Activated B cell treated with CpG ODN at 0.5 μM for 24 hours (primary cell): ENCODE measurements at regions of chr4 and their contacts with region 1.

Region 1: GRCh38 chr4:184649026-184649970 is at the starts of genes CASP3 and PRIMPOL:
- DNase-seq: peak; percentile 98
- ATAC-seq: peak; percentile 92
- H3K4me3 Mint-ChIP-seq: peak within 1 kb of the TSS; percentile 94
- H3K27ac Mint-ChIP-seq: peak within 1 kb of the TSS; percentile 89
- H3K4me1 Mint-ChIP-seq: peaks cover 43% of the 10 kb centered on the region
- H3K27me3 Mint-ChIP-seq: no peaks in the 10 kb centered on the region
- CTCF ChIP-seq: no peak
- total RNA-seq, gene CASP3: 24.0 and 24.9 TPM in 2 replicates
- total RNA-seq, gene PRIMPOL: 9.1 and 11.6 TPM in 2 replicates

Region 2: GRCh38 chr4:183659029-183659871 is 990.0 kb before region 1 on chr4 and contains the starts of genes RWDD4 and TRAPPC11:
- CTCF ChIA-PET with region 1: no interaction called
- POLR2A ChIA-PET with region 1: interaction called, 7 read pairs
- intact Hi-C with region 1: loop called (anchors 5 kb)
- DNase-seq: peak; percentile 87
- ATAC-seq: peak; percentile 98
- H3K4me3 Mint-ChIP-seq: peak within 1 kb of the TSS; percentile 93
- H3K27ac Mint-ChIP-seq: peak within 1 kb of the TSS; percentile 92
- H3K4me1 Mint-ChIP-seq: peaks cover 33% of the 10 kb centered on the region
- H3K27me3 Mint-ChIP-seq: no peaks in the 10 kb centered on the region
- CTCF ChIP-seq: no peak
- total RNA-seq, gene RWDD4: 14.6 and 15.4 TPM in 2 replicates
- total RNA-seq, gene TRAPPC11: 42.9 and 45.2 TPM in 2 replicates

Region 3: GRCh38 chr4:183860731-183861130 is 788.6 kb before region 1 on chr4:
- CTCF ChIA-PET with region 1: no interaction called
- POLR2A ChIA-PET with region 1: no interaction called
- intact Hi-C with region 1: no loop called
- DNase-seq: no peak
- ATAC-seq: no peak
- H3K4me3 Mint-ChIP-seq: no peak overlapping the region
- H3K27ac Mint-ChIP-seq: no peak overlapping the region
- H3K4me1 Mint-ChIP-seq: no peaks in the 10 kb centered on the region
- H3K27me3 Mint-ChIP-seq: peaks cover 7% of the 10 kb centered on the region
- CTCF ChIP-seq: no peak

Region 4: DNA sequence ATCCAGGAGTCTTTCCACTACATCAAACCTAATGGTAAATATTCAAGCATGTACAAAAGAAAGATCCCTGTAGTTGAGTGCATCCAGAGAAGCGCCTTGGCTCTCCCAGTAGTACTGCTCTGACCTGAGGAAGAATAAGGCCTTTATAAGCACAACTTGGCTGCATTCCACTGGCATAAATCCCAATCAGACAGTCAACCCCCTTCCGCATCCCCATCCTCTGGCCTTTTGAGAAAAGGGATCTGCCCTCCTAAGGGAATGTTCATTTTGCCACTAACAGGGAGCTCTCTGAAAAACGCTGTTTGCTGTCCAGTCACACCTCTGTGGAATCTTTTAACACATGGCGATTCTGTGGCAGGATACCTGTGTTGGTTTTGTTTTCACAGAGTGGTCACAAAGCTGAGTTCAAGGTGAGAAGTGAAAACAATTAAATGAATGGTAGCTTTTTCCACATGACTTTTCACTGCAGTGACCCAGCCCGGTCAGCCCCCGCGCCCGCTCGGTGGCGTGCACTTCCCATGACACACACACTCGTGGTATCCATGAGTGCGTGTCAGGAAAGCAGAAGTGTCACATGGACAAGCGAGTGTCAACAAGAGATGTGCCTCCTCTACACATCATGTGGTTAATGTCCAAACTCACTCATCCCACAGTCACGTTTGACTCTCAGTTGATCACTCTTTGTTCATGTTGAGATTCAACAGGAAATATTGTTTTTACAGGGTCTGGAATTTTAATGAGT is 319.5 kb before region 1 on chr4:
- CTCF ChIA-PET with region 1: no interaction called
- POLR2A ChIA-PET with region 1: interaction called, 13 read pairs
- intact Hi-C with region 1: no loop called
- DNase-seq: no peak
- ATAC-seq: peak; percentile 26
- H3K4me3 Mint-ChIP-seq: peak overlapping the region; percentile 47
- H3K27ac Mint-ChIP-seq: peak overlapping the region; percentile 97
- H3K4me1 Mint-ChIP-seq: peaks cover 78% of the 10 kb centered on the region
- H3K27me3 Mint-ChIP-seq: no peaks in the 10 kb centered on the region
- CTCF ChIP-seq: no peak

Region 5: GRCh38 chr4:184688447-184688846 is 39.1 kb after region 1 on chr4:
- CTCF ChIA-PET with region 1: no interaction called
- POLR2A ChIA-PET with region 1: no interaction called
- intact Hi-C with region 1: no loop called
- DNase-seq: no peak
- ATAC-seq: no peak
- H3K4me3 Mint-ChIP-seq: no peak overlapping the region
- H3K27ac Mint-ChIP-seq: no peak overlapping the region
- H3K4me1 Mint-ChIP-seq: no peaks in the 10 kb centered on the region
- H3K27me3 Mint-ChIP-seq: no peaks in the 10 kb centered on the region
- CTCF ChIP-seq: no peak

Region 6: DNA sequence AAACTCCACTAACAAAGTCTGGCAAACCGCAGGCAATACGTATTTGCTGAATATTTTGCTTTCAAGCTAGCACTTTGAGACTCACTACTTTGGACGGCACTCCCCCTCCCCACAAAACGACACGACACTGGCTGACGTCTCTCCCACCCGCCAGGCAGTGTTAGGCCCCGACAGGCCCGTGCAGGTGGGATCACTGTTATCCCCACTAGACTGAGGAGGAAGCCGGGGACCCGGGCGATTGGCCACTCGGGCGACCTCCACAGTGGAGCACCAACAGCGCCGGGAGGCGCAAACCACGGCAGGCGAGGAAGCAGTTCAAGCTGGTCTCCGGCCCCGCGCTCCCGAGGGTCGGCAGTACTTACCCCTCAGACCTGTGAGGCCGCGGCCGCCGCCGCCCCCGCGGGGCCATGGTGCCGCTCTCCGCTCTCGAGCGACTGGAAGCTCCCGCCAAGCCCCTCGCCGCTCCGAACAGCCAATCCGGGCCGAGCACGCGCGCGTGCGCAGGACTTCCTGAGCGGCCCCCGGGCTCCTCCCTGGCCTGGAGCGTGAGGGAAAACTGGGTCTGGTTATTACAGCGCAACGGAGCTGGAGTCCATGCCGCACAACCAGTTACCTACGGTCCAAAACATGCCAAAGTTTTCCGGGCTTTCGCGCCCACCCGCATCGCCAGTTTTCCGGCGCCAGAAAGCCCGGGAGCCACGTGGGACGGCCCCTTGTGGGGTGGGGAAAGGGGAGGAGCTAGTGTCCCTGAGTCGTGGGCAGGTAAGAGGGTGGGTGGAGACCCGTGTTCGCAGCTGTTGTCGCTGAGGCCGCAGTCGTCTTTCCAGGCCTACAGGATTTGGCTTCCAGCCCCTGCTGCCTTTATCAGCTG is 84.6 kb after region 1 on chr4 and contains the start of gene CENPU:
- CTCF ChIA-PET with region 1: interaction called, 4 read pairs
- POLR2A ChIA-PET with region 1: interaction called, 26 read pairs
- intact Hi-C with region 1: loop called (anchors 1 kb)
- DNase-seq: peak; percentile 95
- ATAC-seq: peak; percentile 96
- H3K4me3 Mint-ChIP-seq: peak within 1 kb of the TSS; percentile 88
- H3K27ac Mint-ChIP-seq: peak within 1 kb of the TSS; percentile 85
- H3K4me1 Mint-ChIP-seq: peaks cover 19% of the 10 kb centered on the region
- H3K27me3 Mint-ChIP-seq: no peaks in the 10 kb centered on the region
- CTCF ChIP-seq: no peak
- total RNA-seq, gene CENPU: 7.0 and 7.1 TPM in 2 replicates

Region 7: DNA sequence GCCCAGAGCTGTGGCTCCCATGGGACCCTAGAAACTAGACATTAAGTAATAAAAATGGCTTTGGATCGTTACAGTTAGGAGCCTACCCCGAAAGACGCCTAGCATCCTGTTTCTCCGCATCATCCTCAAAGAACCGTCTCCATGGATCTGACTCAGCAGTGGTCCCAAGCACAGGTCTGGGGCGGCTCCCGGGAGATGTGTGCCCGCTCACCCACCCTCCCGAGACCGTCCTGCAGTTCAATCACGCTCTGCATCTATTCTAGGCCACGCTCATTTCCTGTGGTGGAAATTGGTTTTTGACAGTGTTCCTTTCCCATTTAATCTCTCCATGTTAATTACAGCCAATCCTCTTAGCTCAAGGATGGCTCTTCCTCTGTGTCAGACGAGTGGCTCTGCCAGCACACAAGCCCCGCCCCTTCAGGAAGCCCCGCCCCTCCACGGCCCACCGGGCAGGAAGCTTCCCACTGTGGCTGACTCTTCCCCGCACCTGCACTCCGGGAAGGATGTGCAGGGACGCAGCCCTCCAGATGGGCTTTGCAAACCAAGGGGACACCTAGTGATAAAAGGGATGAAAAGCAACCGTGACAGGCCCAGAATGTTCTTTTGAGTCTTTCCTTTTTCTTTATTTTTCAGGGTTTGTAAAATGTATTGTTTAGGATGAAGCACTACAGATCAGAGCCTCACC is 334.5 kb after region 1 on chr4:
- CTCF ChIA-PET with region 1: no interaction called
- POLR2A ChIA-PET with region 1: no interaction called
- intact Hi-C with region 1: loop called (anchors 1 kb)
- DNase-seq: peak; percentile 61
- ATAC-seq: peak; percentile 89
- H3K4me3 Mint-ChIP-seq: no peak overlapping the region
- H3K27ac Mint-ChIP-seq: no peak overlapping the region
- H3K4me1 Mint-ChIP-seq: no peaks in the 10 kb centered on the region
- H3K27me3 Mint-ChIP-seq: peaks cover 3% of the 10 kb centered on the region
- CTCF ChIP-seq: no peak

Region 8: DNA sequence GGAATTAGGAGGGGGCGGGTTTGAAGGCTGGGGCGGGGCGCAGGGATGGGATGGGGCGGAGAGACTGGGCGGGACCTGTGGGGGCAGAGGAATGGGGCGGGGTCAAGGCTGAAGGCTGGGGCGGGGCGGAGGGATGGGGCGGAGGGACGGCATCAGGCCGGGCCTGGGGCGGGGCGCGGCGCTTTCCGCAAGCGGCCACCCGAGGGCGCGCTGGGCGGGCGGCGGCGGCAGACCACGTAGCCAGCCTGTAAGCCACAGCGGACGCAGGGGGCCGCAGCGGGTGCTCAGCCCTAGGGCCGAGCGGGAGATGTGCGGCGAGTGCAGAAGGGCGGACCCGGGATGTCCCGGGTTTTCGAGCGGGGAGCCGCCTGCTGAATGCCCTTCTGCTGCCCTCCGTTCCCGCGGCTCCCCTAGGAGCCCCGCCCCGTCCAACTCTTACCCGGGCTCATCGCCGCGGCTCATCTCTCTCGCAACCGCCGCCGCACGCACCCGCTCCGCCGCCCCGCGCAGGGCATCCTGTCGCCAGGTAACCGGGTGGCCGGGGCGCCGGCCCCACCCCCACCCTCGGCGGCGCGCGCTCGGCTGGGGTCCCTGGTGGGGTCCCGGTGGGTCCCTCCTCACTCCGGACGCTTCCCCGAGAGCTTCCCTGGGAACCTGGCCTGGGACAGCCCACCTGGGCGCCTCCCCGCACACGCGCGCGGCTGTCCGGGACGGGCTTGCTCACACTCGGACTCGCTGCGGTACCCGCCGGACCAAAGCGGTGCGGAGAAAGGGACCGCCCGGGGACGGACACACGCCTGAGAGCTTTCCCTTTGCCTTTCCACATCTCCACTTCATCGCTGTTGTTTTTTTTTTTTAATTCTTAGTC is 822.2 kb after region 1 on chr4 and contains the start of gene CCDC110:
- CTCF ChIA-PET with region 1: no interaction called
- POLR2A ChIA-PET with region 1: no interaction called
- intact Hi-C with region 1: loop called (anchors 1 kb)
- DNase-seq: peak; percentile 87
- ATAC-seq: peak; percentile 95
- H3K4me3 Mint-ChIP-seq: peak within 1 kb of the TSS; percentile 88
- H3K27ac Mint-ChIP-seq: peak within 1 kb of the TSS; percentile 80
- H3K4me1 Mint-ChIP-seq: peaks cover 18% of the 10 kb centered on the region
- H3K27me3 Mint-ChIP-seq: no peaks in the 10 kb centered on the region
- CTCF ChIP-seq: no peak
- total RNA-seq, gene CCDC110: 0.33 and 0.71 TPM in 2 replicates